ENCODE measurements at regions of chr2 and their contacts with region 1.

Region 1: DNA sequence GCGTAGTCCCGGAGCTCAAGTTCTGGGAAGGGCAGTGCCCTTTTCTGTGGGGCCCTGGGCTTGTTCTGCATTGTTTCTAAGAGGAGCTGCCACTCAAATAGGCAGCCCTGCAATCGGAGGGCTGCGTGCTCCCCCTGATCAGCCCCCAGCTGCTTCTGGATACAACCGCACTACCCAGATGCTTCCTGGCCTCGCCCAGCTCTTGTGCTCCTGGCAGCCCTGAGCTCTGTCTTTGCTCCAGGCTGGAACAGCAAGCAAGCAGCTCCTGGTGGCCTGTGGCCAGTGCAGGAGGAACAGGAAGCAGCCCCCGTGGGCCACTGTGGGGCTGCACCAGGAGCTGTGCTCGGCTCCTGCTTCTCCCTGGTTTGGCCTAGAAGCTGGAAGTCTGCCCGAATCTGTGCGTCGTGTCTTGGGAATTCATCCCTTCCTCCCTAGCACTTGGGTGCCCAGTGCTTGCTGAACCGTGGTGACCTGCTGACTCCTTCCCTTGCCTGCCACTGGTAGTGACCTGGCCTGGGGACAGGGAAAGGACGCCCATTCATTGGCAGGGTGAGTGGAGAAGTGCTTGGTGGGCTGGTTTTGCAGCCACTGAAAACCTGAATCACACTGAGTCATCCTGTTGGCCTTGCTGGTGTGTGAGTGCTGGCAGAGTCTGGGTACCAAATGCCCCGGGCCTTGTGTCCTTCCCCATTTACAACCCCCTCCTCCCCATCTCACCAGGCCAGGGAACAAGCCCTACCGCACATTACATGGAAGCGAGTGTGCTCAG is 27.3 kb upstream of the NTSR2 start:
- DNase-seq: peak in 2 of 3 donors; percentile 72 to 75
- ATAC-seq: peak; percentile 4 to 43
- H3K4me3 ChIP-seq: no peak overlapping the region
- H3K27ac ChIP-seq: peak overlapping the region; percentile 27
- H3K4me1 ChIP-seq: peaks cover 8% of the 10 kb centered on the region
- H3K27me3 ChIP-seq: no peaks in the 10 kb centered on the region

Region 2: GRCh38 chr2:11743846-11744553 is 46.7 kb after region 1 on chr2:
- intact Hi-C with region 1: loop called in 1 of 4 experiments (anchors 5 kb)
- DNase-seq: peak; percentile 97 to 98 (median 98)
- ATAC-seq: peak; percentile 94 to 97
- H3K4me3 ChIP-seq: no peak overlapping the region
- H3K27ac ChIP-seq: peak overlapping the region; percentile 55
- H3K4me1 ChIP-seq: peaks cover 17% of the 10 kb centered on the region
- H3K27me3 ChIP-seq: no peaks in the 10 kb centered on the region

Measured in right cardiac atrium (tissue), 5 donors.